Activated naive CD4-positive, alpha-beta T cell treated with anti-CD3 and anti-CD28 coated beads for 36 hours (primary cell): ENCODE measurements at regions of chr3 and their contacts with region 1.

Region 1: DNA sequence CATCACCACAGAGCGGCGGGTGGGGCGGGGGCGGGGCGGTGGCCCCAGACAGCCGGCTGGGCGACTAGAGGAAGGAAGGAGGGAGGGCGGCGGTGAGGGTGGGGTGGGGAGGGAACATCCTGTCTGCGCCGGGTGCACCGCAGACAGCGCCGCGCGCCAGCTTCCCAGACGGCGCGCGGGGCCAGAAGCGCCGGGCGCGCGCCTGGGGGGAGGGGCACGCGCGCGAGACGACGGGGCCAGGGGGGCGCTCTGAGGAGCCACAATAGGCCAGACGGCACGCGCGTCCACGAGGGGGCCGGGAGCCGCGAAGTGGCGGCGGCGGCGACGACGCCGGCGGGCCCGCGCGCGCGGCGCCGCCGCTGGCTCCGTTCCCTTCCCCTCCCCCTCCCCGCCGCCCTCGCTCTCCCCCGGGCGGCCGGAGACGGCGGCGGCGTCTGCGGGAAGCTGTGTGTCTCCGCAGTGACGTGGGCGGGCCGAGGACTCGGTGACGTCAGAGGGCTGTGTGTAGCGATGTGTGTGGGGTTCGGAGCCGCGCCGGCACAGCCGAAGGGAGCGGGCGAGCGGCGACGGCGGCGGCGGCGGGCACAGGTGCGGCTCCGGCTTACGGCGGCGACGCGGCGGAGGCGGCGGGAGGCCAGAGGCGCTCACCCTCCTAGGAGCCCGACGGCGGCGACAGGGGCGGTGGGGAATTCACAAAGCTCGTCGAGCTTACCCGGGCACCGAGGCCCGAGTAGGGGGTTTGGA is at the start of gene SKIL:
- DNase-seq: peak; percentile 97
- H3K4me3 Mint-ChIP-seq: peak within 1 kb of the TSS; percentile 96
- H3K27ac Mint-ChIP-seq: peak within 1 kb of the TSS; percentile 95
- H3K4me1 Mint-ChIP-seq: peaks cover 32% of the 10 kb centered on the region
- H3K27me3 Mint-ChIP-seq: no peaks in the 10 kb centered on the region
- total RNA-seq, gene SKIL: 16.3 to 17.5 TPM

Region 2: DNA sequence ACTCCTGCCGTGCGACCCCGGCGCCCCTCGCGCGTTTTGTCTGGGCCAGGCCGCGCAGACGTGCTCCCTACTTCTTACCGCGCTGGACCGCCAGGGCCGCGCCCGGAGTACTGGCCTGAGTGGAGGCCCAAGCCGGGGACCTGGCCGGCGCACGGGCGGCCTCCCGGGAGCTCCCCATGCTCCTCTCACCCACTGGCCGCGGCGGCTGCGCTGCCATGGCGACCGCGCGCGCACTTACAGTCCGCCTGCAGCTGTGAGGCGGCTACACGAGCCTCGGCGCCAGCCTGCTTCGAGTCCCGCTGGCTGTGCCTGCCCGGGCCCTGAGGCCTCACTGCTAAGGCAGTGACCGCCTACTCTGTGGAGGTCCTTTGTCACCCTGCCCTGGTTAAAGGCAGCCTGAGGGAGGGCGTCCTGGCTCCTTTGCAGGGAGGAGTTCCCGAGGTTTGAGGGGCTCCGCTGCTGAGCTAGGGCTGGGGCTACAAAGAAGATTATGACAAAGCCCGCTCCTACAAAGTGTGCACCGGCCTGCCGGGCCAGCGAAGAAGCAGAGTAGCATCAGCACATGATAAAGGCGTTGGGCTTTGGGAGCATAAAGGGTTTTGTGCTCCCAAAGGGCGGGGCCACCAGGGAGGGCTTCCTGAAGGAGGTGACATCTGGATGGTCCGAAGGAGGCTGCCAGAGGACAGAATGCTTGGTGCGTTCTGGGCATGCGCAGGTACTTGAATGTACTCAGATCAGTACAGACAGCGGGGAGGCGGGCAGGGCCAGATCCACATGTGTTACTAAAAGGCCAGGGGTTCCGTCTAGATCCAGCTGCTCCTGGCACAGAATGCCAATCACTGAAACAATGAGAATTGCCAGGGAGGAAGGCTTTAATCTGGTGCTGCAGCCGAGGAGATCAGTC is 544.8 kb before region 1 on chr3 and contains the starts of genes LRRC34 and LRRIQ4:
- CTCF ChIA-PET with region 1: no interaction called
- intact Hi-C with region 1: loop called (anchors 2 kb)
- DNase-seq: peak; percentile 91
- H3K4me3 Mint-ChIP-seq: peak within 1 kb of the TSS; percentile 82
- H3K27ac Mint-ChIP-seq: peak within 1 kb of the TSS; percentile 79
- H3K4me1 Mint-ChIP-seq: peaks cover 19% of the 10 kb centered on the region
- H3K27me3 Mint-ChIP-seq: no peaks in the 10 kb centered on the region
- total RNA-seq, gene LRRC34: 3.8 to 3.9 TPM
- total RNA-seq, gene LRRIQ4: 0.12 TPM in 1 of 2 experiments, not detected in the other

Region 3: DNA sequence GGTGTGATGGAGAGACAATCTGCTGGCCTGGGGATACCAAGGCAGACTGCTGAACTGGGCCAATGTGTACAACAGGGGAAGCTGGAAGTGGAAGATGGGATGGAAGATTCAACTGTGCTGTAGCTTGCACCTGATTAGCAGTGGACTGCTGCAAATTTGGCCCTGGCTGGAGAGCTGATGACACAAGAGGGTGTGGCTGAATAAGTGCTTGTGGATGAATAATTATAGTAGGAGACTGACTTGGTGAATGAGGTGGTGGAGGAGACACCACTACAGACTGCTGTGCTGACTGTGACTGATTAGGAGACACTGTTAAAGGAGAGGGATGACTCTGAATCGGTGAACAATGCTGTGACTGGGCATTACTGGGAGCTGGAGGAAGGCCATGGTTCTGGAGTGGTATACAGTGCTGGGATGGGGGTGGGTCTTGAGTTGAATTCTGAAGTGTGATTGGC is 228.3 kb before region 1 on chr3:
- CTCF ChIA-PET with region 1: no interaction called
- intact Hi-C with region 1: loop called (anchors 2 kb)
- DNase-seq: peak; percentile 48
- H3K4me3 Mint-ChIP-seq: peak overlapping the region; percentile 20
- H3K27ac Mint-ChIP-seq: peak overlapping the region; percentile 76
- H3K4me1 Mint-ChIP-seq: peaks cover 40% of the 10 kb centered on the region
- H3K27me3 Mint-ChIP-seq: no peaks in the 10 kb centered on the region

Region 4: DNA sequence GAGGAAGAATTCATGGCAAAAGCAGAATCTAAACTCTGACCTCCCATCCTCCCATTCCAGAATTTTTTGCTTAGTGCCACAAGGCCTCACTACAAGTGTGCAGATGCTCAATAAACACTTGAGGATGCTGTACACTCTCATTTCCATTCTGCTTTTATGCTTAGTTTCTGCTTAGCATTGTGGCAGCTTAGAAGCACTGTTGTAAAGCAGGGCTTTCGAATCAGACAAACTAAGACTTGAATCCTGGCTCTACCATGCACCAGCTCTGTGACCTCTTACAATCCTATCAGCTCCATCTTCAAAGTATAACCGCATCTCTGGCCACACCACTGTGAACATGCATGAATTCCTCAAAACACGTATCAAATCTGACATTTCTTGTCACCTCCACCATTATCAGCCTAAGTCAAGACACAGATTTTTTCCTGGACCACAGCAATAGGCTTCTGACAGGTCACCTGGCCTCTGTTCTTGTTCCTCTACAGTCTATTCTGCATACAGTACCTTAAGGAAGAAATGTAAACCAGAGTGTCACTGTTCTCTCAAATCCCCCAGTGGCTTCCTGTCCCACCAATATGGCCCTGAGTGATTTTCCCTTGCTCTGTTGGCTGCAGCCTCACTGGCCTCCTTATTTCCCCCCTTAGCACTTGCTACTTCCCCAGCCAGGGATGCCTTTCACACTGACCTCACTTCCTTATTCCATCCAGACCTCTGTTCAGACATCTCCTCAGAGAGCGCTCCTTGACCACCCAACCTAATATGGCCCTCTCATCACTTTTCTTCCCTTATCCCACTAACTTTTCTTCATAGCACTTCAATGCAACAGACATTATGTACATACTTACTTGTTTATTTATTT is 167.7 kb before region 1 on chr3:
- CTCF ChIA-PET with region 1: no interaction called
- intact Hi-C with region 1: loop called (anchors 2 kb)
- DNase-seq: no peak
- H3K4me3 Mint-ChIP-seq: no peak overlapping the region
- H3K27ac Mint-ChIP-seq: no peak overlapping the region
- H3K4me1 Mint-ChIP-seq: peaks cover 11% of the 10 kb centered on the region
- H3K27me3 Mint-ChIP-seq: peaks cover 5% of the 10 kb centered on the region

Region 5: DNA sequence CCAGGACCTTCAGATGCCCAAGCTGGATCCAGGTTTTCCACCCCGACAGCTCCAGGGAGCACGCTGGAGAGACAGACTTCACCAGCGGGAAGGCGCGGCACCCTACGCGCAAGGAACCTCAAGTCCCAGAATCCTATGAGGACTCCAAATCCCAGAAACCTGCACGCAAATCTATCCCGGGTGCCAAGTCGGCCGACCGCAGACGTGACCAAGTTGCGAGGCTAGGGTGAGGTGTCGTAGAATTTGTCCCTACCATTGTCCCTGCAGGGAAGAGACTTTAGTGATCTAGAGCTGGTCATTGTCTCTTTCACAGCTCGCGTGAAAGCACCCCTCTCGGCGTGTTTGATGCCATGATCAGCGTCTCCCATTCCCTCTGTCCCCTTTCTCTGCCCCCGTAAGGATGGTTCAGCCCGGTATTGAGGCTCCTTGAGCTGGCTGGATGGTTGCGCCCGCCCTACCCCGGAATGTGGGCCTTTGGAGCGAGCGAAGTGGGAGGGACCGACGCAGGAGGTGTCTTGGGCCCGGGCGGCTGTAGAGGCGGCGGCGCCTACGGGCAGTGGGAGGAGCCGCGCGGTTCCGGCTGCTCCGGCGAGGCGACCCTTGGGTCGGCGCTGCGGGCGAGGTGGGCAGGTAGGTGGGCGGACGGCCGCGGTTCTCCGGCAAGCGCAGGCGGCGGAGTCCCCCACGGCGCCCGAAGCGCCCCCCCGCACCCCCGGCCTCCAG is 135.3 kb before region 1 on chr3 and contains the start of gene PRKCI:
- CTCF ChIA-PET with region 1: interaction called, 3 read pairs
- intact Hi-C with region 1: loop called (anchors 1 kb)
- DNase-seq: peak; percentile 95
- H3K4me3 Mint-ChIP-seq: peak within 1 kb of the TSS; percentile 78
- H3K27ac Mint-ChIP-seq: peak within 1 kb of the TSS; percentile 92
- H3K4me1 Mint-ChIP-seq: peaks cover 24% of the 10 kb centered on the region
- H3K27me3 Mint-ChIP-seq: no peaks in the 10 kb centered on the region
- total RNA-seq, gene PRKCI: 20.8 to 23.0 TPM

Region 6: GRCh38 chr3:170277833-170278580 is 79.3 kb before region 1 on chr3:
- CTCF ChIA-PET with region 1: no interaction called
- intact Hi-C with region 1: loop called (anchors 2 kb)
- DNase-seq: no peak
- H3K4me3 Mint-ChIP-seq: peak overlapping the region; percentile 62
- H3K27ac Mint-ChIP-seq: peak overlapping the region; percentile 35
- H3K4me1 Mint-ChIP-seq: peaks cover 19% of the 10 kb centered on the region
- H3K27me3 Mint-ChIP-seq: no peaks in the 10 kb centered on the region

Region 7: DNA sequence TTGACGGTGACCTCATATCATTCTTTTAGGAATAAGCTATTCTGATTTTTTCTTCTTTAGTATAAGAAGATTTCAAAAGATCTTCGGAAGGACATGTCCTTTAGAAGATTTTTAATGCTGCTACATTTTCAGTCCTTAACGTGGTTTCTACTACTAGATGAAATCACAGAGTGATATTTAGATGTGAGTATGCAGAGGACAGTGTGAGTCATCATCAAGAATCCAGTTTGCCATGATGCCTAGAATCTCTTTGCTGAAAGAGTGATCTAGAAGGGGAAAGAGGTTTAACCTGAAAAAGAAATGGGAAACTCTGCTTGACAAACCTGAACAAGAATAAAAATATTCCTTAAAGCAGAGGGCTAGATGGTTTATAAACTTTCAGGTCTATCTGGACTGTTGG is 185.4 kb after region 1 on chr3:
- CTCF ChIA-PET with region 1: no interaction called
- intact Hi-C with region 1: no loop called
- DNase-seq: no peak
- H3K4me3 Mint-ChIP-seq: no peak overlapping the region
- H3K27ac Mint-ChIP-seq: no peak overlapping the region
- H3K4me1 Mint-ChIP-seq: no peaks in the 10 kb centered on the region
- H3K27me3 Mint-ChIP-seq: peaks cover 19% of the 10 kb centered on the region